Activated CD4-positive, alpha-beta memory T cell treated with anti-CD3 and anti-CD28 coated beads, Interleukin-2, amount 10 ng/mL, durations not matched to agents 7 days and 5 days (primary cell): ENCODE measurements at regions of chr17 and their contacts with region 1.

Region 1: GRCh38 chr17:35119368-35120165 is at the start of gene RAD51D:
- DNase-seq: peak; percentile 83
- H3K4me3 Mint-ChIP-seq: peak within 1 kb of the TSS; percentile 79
- H3K27ac Mint-ChIP-seq: peak within 1 kb of the TSS; percentile 78
- H3K4me1 Mint-ChIP-seq: peaks cover 41% of the 10 kb centered on the region
- H3K27me3 Mint-ChIP-seq: no peaks in the 10 kb centered on the region
- total RNA-seq, gene RAD51D: 25.6 to 25.9 TPM

Region 2: GRCh38 chr17:34542700-34543336 is 576.7 kb before region 1 on chr17:
- CTCF ChIA-PET with region 1: interaction called, 12 read pairs
- POLR2A ChIA-PET with region 1: interaction called, 9 read pairs
- DNase-seq: peak; percentile 52
- H3K4me3 Mint-ChIP-seq: no peak overlapping the region
- H3K27ac Mint-ChIP-seq: no peak overlapping the region
- H3K4me1 Mint-ChIP-seq: no peaks in the 10 kb centered on the region
- H3K27me3 Mint-ChIP-seq: peaks cover 30% of the 10 kb centered on the region

Region 3: DNA sequence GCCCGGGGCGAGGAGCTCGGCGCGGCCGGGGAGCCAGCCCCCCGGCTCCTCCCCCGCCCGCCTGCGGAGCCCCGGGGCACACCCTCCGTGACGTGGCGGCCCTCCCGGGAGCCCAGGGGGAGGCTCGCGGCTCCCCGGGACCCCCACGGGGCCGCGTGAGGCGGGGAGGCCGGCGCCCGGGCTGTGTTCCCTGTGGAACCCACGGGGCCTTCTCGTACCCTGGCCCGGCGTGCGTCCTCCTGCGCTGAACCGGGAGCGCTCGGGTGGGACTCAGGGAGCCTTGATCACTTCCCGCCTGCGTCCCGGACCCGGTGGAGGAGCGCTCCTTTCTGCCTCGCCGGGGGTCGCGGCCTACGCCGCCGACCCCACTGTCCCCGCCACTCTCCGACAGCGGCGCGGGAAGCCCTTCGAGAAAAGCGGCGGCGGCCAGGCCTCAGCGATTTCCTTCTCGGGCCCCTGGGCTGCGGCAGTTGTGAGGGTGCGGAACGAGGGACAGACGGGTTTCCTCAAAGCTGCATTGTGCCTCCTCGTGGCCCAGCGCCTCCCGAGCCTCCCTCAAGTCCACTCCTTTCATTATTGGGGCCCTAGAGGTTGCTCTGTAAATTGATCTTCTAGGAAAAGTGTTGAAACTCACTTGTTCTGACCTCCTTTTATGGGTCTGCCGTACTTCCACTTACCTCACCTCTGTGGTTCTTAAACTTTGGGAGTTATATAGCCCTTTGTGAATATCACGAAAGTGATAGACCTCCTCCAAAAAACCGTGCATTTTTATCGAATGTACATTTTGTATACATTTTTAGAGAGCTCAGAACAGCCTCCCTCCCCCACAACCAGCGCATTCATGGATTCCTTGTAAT is 138.7 kb before region 1 on chr17:
- CTCF ChIA-PET with region 1: interaction called, 18 read pairs
- POLR2A ChIA-PET with region 1: interaction called, 21 read pairs
- DNase-seq: peak; percentile 81
- H3K4me3 Mint-ChIP-seq: peak overlapping the region; percentile 79
- H3K27ac Mint-ChIP-seq: peak overlapping the region; percentile 93
- H3K4me1 Mint-ChIP-seq: peaks cover 54% of the 10 kb centered on the region
- H3K27me3 Mint-ChIP-seq: no peaks in the 10 kb centered on the region

Region 4: DNA sequence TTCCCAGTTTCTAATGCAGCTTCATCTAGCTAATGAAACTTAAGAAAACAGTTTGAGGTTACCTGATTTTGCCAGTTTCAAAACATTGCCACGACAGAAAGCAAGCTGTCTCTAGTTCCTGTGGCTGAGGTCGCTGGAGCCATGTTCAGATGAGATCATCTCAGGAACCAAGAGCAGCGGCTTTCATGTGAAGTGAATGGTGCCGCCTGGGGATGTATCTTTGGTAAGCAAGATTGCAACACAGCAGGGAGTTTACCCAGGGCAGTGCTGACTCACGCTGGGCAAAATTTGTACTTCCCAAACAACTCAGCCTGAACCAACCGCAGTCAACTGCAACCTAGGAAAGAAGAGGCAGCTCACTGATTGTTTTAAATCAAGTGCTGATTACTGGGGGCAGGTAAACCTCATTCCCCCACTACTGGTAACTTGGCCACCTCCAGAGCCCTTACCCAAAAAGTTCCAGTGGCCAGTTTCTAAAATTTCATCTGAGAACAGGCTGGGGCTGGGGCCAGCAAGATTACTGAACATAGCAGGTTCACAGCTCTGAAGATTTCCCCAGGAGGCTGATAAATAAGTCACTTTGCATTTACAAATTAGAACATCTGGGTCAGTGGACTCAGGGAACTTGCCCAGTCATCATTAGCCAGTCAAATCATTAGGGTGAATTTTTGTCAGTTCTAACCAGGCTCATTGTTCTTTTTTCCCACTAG is 55.9 kb before region 1 on chr17 and contains the start of gene RFFL:
- CTCF ChIA-PET with region 1: interaction called, 17 read pairs
- POLR2A ChIA-PET with region 1: interaction called, 8 read pairs
- DNase-seq: peak; percentile 91
- H3K4me3 Mint-ChIP-seq: peak within 1 kb of the TSS; percentile 48
- H3K27ac Mint-ChIP-seq: peak within 1 kb of the TSS; percentile 94
- H3K4me1 Mint-ChIP-seq: peaks cover 60% of the 10 kb centered on the region
- H3K27me3 Mint-ChIP-seq: no peaks in the 10 kb centered on the region
- total RNA-seq, gene RFFL: 47.3 to 53.9 TPM

Region 5: GRCh38 chr17:35088881-35089585 is 30.5 kb before region 1 on chr17:
- CTCF ChIA-PET with region 1: interaction called, 37 read pairs
- POLR2A ChIA-PET with region 1: interaction called, 29 read pairs
- DNase-seq: peak; percentile 93
- H3K4me3 Mint-ChIP-seq: peak overlapping the region; percentile 89
- H3K27ac Mint-ChIP-seq: peak overlapping the region; percentile 90
- H3K4me1 Mint-ChIP-seq: peaks cover 54% of the 10 kb centered on the region
- H3K27me3 Mint-ChIP-seq: no peaks in the 10 kb centered on the region

Region 6: GRCh38 chr17:35170968-35171771 is 51.6 kb after region 1 on chr17:
- CTCF ChIA-PET with region 1: no interaction called
- POLR2A ChIA-PET with region 1: no interaction called
- DNase-seq: no peak
- H3K4me3 Mint-ChIP-seq: no peak overlapping the region
- H3K27ac Mint-ChIP-seq: peak overlapping the region; percentile 26
- H3K4me1 Mint-ChIP-seq: peaks cover 23% of the 10 kb centered on the region
- H3K27me3 Mint-ChIP-seq: no peaks in the 10 kb centered on the region